Psoas muscle (tissue), 8 donors: ENCODE measurements at regions of chr11 and their contacts with region 1.

Region 1: GRCh38 chr11:65593518-65594298 is 1.9 kb downstream of the KCNK7 start:
- DNase-seq: peak in 1 of 2 donors; percentile 87
- ATAC-seq: peak; percentile 72 to 79 (median 74)
- H3K4me3 ChIP-seq: no peak overlapping the region
- H3K27ac ChIP-seq: peak overlapping the region; percentile 91
- H3K4me1 ChIP-seq: peaks cover 51% of the 10 kb centered on the region
- H3K27me3 ChIP-seq: no peaks in the 10 kb centered on the region
- CTCF ChIP-seq: peak; percentile 82

Region 2: DNA sequence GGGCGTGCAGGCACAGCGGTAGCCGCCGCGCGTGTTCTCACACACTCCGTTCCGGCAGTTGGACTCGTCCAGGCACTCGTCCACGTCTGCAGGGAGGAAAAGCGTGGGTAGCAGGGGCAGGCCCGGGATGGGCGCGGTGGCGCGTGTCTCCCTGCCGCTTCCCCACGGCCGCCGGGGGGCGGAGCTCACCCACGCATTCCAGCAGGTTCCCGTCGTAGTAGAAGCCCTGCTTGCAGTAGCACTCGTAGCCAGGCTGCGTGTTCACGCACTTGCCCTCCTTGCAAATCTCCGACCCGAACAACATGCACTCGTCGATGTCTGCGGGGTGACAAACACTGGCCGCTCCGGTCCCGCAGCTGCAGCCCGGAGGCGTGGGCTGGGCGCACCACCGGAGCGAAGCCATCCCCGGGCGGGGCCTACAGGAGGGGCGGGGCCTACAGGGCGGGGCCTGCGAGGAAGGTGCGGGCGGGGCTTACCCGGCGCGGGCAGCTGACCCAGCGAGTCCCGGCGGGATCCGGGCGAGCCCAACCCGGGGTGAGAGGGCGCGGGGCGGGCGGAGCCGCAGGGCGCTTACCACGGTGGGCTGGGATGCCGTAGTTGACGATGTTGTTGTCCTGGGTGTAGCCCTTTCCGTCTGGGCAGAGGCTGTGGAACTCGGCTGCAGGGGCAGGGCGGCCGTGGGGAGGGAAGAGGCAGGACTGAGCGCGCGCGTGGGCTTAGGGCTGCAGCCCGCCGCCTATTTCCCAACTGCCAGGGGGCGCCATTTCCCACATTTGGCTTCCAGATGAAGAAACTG is 53.2 kb before region 1 on chr11:
- intact Hi-C with region 1: loop called in 1 of 2 experiments (anchors 2 kb)
- DNase-seq: peak; percentile 89 to 95
- ATAC-seq: peak; percentile 85 to 95 (median 93)
- H3K4me3 ChIP-seq: peak overlapping the region; percentile 65
- H3K27ac ChIP-seq: peak overlapping the region; percentile 84
- H3K4me1 ChIP-seq: peaks cover 16% of the 10 kb centered on the region
- H3K27me3 ChIP-seq: no peaks in the 10 kb centered on the region
- CTCF ChIP-seq: peak; percentile 77